CD4-positive, alpha-beta T cell (primary cell): ENCODE measurements at regions of chrX and their contacts with region 1.

Region 1: GRCh38 chrX:39755143-39756032 is 342.4 kb downstream of the BCOR start:
- DNase-seq: peak in 1 of 14 experiments; percentile 29
- ATAC-seq: no peak
- H3K4me3 ChIP-seq: no peak overlapping the region
- H3K4me3 Mint-ChIP-seq: no peak overlapping the region
- H3K27ac ChIP-seq: no peak overlapping the region
- H3K27ac Mint-ChIP-seq: no peak overlapping the region
- H3K4me1 ChIP-seq: peaks cover 3% of the 10 kb centered on the region
- H3K4me1 Mint-ChIP-seq: peaks cover 8% of the 10 kb centered on the region
- H3K27me3 ChIP-seq: no peaks in the 10 kb centered on the region
- H3K27me3 Mint-ChIP-seq: no peaks in the 10 kb centered on the region
- CTCF ChIP-seq: no peak

Region 2: GRCh38 chrX:39796856-39797255 is 41.5 kb after region 1 on chrX:
- CTCF ChIA-PET with region 1: no interaction called
- POLR2A ChIA-PET with region 1: no interaction called
- intact Hi-C with region 1: loop called in 1 of 2 experiments (anchors 5 kb)
- DNase-seq: no peak
- ATAC-seq: no peak
- H3K4me3 ChIP-seq: no peak overlapping the region
- H3K4me3 Mint-ChIP-seq: no peak overlapping the region
- H3K27ac ChIP-seq: no peak overlapping the region
- H3K27ac Mint-ChIP-seq: no peak overlapping the region
- H3K4me1 ChIP-seq: no peaks in the 10 kb centered on the region
- H3K4me1 Mint-ChIP-seq: no peaks in the 10 kb centered on the region
- H3K27me3 ChIP-seq: no peaks in the 10 kb centered on the region
- H3K27me3 Mint-ChIP-seq: no peaks in the 10 kb centered on the region
- CTCF ChIP-seq: no peak

Region 3: DNA sequence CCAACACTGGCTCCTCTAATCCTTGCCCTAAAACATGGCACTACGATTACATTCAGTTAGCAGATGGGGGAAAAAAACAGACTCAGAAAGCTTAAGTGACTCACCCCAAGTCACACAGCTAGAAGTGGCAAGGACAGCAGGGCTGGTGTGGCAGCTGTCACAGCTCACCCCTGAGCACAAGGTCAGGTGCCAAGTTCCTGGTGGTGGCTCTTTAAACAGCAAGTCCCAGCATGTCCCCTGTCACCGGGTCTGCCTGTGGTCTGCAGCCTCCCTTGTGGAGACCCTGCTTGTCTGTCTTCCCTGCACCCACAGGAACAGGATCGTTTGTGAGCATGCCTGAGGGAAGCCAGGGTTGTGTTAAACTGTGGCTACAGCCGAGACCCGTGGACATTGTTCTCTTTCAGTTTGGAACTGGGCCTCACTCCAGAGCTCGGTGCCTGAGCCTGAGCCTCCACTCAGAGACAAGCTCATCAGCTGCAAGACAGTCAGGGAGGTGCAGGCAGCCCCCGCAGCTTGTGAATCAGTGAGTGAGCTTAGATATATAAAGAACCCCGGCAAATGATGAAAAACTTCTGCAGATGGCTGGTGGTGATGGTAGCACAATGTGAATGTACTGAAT is 81.5 kb after region 1 on chrX:
- CTCF ChIA-PET with region 1: no interaction called
- POLR2A ChIA-PET with region 1: no interaction called
- intact Hi-C with region 1: no loop called
- DNase-seq: no peak
- ATAC-seq: no peak
- H3K4me3 ChIP-seq: no peak overlapping the region
- H3K4me3 Mint-ChIP-seq: no peak overlapping the region
- H3K27ac ChIP-seq: no peak overlapping the region
- H3K27ac Mint-ChIP-seq: no peak overlapping the region
- H3K4me1 ChIP-seq: no peaks in the 10 kb centered on the region
- H3K4me1 Mint-ChIP-seq: no peaks in the 10 kb centered on the region
- H3K27me3 ChIP-seq: no peaks in the 10 kb centered on the region
- H3K27me3 Mint-ChIP-seq: no peaks in the 10 kb centered on the region
- CTCF ChIP-seq: no peak

Region 4: DNA sequence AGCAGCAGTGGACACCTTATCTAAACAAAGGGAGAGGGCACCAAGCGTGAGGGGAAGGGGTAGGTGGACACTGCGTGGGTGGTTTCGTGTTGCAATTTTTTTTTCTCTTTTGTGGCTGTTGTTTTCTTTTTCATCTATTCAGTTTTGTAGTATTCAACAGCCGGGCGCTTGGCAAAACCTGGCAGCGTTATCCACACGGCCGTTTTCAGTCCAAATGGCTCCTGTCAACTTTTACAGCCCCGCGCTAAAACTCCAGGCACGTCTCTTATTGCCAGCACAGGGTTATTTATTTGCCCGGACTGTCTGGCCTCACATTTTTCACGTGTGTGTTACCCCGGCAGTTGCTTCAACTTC is 150.1 kb after region 1 on chrX:
- CTCF ChIA-PET with region 1: no interaction called
- POLR2A ChIA-PET with region 1: no interaction called
- intact Hi-C with region 1: no loop called
- DNase-seq: no peak
- ATAC-seq: no peak
- H3K4me3 ChIP-seq: no peak overlapping the region
- H3K4me3 Mint-ChIP-seq: no peak overlapping the region
- H3K27ac ChIP-seq: no peak overlapping the region
- H3K27ac Mint-ChIP-seq: no peak overlapping the region
- H3K4me1 ChIP-seq: peaks cover 4% of the 10 kb centered on the region
- H3K4me1 Mint-ChIP-seq: no peaks in the 10 kb centered on the region
- H3K27me3 ChIP-seq: no peaks in the 10 kb centered on the region
- H3K27me3 Mint-ChIP-seq: no peaks in the 10 kb centered on the region
- CTCF ChIP-seq: no peak

Region 5: GRCh38 chrX:39921838-39922237 is 166.4 kb after region 1 on chrX:
- CTCF ChIA-PET with region 1: no interaction called
- POLR2A ChIA-PET with region 1: no interaction called
- intact Hi-C with region 1: no loop called
- DNase-seq: no peak
- ATAC-seq: no peak
- H3K4me3 ChIP-seq: no peak overlapping the region
- H3K4me3 Mint-ChIP-seq: no peak overlapping the region
- H3K27ac ChIP-seq: no peak overlapping the region
- H3K27ac Mint-ChIP-seq: no peak overlapping the region
- H3K4me1 ChIP-seq: no peaks in the 10 kb centered on the region
- H3K4me1 Mint-ChIP-seq: no peaks in the 10 kb centered on the region
- H3K27me3 ChIP-seq: no peaks in the 10 kb centered on the region
- H3K27me3 Mint-ChIP-seq: no peaks in the 10 kb centered on the region
- CTCF ChIP-seq: no peak